T-cell (primary cell): ENCODE measurements at regions of chr22 and their contacts with region 1.

Region 1: DNA sequence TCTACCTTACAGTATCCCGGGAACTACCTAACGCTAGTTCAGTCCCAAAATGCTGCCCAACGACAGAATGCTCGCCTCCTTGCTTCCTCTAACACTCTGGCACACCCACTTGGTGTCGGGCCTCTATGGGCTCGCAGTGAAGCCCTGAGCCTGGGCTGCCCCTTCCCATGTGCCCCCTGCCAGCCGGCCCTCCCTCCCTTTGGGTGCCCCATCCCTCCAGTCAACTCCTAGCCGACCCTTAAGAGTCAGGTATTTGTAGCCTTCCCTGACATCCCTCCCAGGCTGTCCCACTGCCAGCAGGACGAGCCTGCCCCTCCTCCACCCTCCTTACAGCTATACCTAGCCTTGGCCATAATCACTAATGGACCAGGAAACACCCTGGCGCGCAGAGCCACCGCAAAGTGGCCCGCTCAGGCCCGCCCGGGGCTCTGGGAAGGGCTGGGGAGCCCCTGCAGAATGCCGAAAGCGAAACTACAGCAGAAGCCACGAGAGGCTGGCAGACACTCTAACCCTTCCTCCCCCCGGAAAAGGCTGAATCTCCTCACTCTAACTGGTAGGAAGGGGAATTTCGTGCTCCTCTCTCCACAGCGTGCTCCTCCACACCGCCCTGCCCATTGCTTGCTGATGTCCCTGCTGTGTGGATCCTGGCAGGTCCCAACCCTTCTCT is 8.2 kb downstream of the CBX7 start:
- DNase-seq: peak in 34 of 35 experiments; percentile 19 to 85 (median 50)
- ATAC-seq: peak; percentile 28 to 51 (median 34)
- H3K4me3 ChIP-seq: peak overlapping the region; percentile 91 to 93
- H3K4me3 Mint-ChIP-seq: peak overlapping the region; percentile 92 to 96 (median 93)
- H3K27ac ChIP-seq: peak overlapping the region; percentile 61
- H3K27ac Mint-ChIP-seq: peak overlapping the region; percentile 95
- H3K4me1 ChIP-seq: peaks cover 5 to 51% of the 10 kb centered on the region in 2 experiments
- H3K4me1 Mint-ChIP-seq: peaks cover 28 to 51% (median 43%) of the 10 kb centered on the region in 3 donors
- H3K27me3 ChIP-seq: no peaks in the 10 kb centered on the region
- H3K27me3 Mint-ChIP-seq: no peaks in the 10 kb centered on the region

Region 2: GRCh38 chr22:39080052-39080762 is 64.0 kb before region 1 on chr22:
- CTCF ChIA-PET with region 1: no interaction called
- POLR2A ChIA-PET with region 1: interaction called in 1 of 2 experiments, 10 read pairs
- DNase-seq: peak in 21 of 35 experiments; percentile 9 to 62 (median 38)
- ATAC-seq: no peak
- H3K4me3 ChIP-seq: peak overlapping the region in 1 of 2 donors; percentile 15
- H3K4me3 Mint-ChIP-seq: peak overlapping the region in 2 of 3 donors; percentile 39 to 57
- H3K27ac ChIP-seq: peak overlapping the region; percentile 89
- H3K27ac Mint-ChIP-seq: peak overlapping the region; percentile 75 to 85
- H3K4me1 ChIP-seq: peaks cover 4 to 83% of the 10 kb centered on the region in 2 experiments
- H3K4me1 Mint-ChIP-seq: peaks cover 41 to 67% (median 55%) of the 10 kb centered on the region in 3 donors
- H3K27me3 ChIP-seq: peaks cover 0 to 3% of the 10 kb centered on the region in 2 experiments
- H3K27me3 Mint-ChIP-seq: no peaks in the 10 kb centered on the region

Region 3: DNA sequence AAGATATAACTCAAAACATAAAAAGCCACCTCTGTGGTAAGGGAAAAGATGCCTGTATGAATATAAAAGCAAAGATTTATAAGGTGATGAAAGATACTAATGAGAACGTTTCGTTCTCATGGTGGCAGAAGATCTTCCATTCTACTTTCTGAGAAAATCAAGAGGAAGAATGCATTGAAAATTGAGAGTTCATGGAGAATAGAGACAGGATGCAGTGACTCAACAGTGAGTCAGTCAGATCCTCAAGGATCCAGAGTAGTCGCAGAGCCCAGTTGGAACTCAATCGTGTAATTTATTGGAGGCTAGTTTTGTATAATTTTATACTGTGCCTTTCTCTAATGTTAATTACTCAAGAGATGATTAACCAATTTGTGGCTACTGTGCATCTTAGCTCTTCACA is 676.0 kb after region 1 on chr22:
- CTCF ChIA-PET with region 1: no interaction called
- POLR2A ChIA-PET with region 1: interaction called in 1 of 2 experiments, 11 read pairs
- DNase-seq: no peak
- ATAC-seq: no peak
- H3K4me3 ChIP-seq: no peak overlapping the region
- H3K4me3 Mint-ChIP-seq: no peak overlapping the region
- H3K27ac ChIP-seq: no peak overlapping the region
- H3K27ac Mint-ChIP-seq: no peak overlapping the region
- H3K4me1 ChIP-seq: no peaks in the 10 kb centered on the region
- H3K4me1 Mint-ChIP-seq: peaks cover 0 to 2% (median 0%) of the 10 kb centered on the region in 3 donors
- H3K27me3 ChIP-seq: no peaks in the 10 kb centered on the region
- H3K27me3 Mint-ChIP-seq: no peaks in the 10 kb centered on the region